ENCODE measurements at regions of chr18 and their contacts with region 1.

Region 1: DNA sequence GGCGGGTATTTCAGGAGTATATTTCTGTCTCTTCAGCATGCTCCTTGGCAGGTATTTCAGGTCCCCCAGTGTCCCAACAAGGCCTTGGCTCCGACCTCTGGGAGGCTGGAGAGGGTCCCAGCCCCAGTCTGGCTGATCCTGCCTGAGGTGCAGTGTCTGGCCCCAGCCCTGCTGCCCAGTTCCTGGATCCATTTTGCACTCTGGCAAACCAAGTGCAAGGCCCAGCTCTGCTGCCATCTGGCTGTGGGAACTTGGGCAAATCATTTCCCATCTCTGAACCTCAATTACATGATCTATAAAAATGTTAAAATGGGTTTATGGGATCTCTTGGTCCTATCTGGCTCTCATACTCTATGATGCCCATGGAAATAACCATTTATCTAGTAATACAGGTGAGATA is 63.6 kb downstream of the ZBTB7C start:
- H3K4me3 Mint-ChIP-seq: no peak overlapping the region
- H3K27ac Mint-ChIP-seq: no peak overlapping the region
- H3K4me1 Mint-ChIP-seq: no peaks in the 10 kb centered on the region
- H3K27me3 Mint-ChIP-seq: peaks cover 12% of the 10 kb centered on the region

Region 2: DNA sequence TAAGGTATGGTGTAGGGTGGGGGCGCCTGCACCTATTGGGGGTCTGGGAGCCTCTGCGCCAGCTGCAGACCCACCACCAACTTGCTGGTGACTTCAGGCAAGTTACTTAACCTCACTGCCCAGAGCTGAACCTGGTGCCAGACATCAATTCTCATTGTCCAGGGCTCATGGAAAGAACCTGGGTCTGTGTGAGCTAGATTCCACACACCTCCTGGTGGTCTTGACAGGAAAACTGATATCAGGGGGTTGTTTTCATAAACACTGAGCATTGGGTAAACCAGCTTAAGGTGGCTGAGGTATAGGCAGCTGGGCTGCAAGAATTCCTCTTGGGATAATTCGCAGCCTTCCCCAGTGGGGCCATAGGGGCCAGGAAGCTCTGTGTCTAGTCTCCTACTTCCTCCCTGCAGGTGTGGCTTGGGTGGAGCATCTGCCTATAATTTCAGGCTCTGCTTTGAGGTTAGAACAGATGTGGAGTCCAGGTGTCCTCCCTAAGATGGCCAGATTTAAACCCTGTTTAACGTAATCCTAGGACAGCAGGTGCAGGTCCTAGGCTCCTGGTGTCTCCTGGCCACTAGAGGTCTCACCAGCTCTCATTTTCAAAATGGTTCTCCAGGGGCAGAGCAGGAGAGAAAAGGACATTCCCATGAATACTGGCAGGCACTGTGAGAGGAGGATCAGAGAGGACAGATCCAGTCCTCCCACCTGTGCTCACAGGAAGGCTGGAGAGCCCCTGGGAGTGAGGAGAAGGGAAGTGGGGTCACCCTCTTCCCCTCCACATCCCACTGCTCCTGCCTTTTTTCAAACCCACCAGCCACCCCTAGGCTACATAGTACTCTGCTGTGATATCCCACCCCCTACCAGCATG is 314.7 kb before region 1 on chr18:
- intact Hi-C with region 1: loop called (anchors 5 kb)
- H3K4me3 Mint-ChIP-seq: no peak overlapping the region
- H3K27ac Mint-ChIP-seq: no peak overlapping the region
- H3K4me1 Mint-ChIP-seq: peaks cover 6% of the 10 kb centered on the region
- H3K27me3 Mint-ChIP-seq: no peaks in the 10 kb centered on the region

Region 3: DNA sequence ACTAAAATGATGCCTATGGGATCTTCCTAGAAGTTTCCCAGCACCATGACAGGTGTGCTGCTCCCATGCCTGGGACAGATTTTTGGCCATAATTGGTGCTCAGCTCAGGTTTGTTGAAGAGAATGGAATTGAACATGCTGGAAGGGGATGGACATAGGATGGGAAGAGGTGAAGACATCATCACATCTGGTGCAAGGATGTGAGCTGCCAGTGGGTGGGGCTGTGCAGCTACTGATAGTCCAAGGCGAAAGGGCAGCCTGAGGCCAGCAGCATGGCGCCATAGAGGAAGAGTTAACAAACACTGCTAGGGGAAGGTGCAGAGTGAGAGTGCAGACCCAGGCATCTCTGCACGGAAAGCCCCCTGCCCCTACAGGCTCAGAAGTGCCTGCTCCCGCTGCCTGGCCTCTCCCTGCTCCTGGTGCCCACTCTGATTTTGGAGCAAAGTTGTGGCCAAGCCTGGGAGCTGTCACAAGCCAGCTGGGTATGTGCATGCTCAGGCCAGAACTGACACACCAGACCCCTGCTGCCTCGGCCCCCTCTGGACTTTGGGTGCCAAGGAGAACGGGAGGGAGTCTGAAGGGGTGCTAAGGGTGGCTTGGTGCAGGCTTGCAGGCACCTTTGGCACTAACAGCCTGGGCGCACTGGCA is 115.0 kb before region 1 on chr18:
- intact Hi-C with region 1: loop called (anchors 5 kb)
- H3K4me3 Mint-ChIP-seq: no peak overlapping the region
- H3K27ac Mint-ChIP-seq: no peak overlapping the region
- H3K4me1 Mint-ChIP-seq: peaks cover 34% of the 10 kb centered on the region
- H3K27me3 Mint-ChIP-seq: peaks cover 5% of the 10 kb centered on the region

Measured in dendritic cell treated with granulocyte-macrophage colony-stimulating factor and Interleukin-4, amounts not matched to agents 40 ng/mL and 50 ng/mL, for 4 days (primary cell).